CD4-positive, alpha-beta memory T cell (primary cell): ENCODE measurements at regions of chr17 and their contacts with region 1.

Region 1: GRCh38 chr17:50865984-50866774 is at the start of gene TOB1:
- DNase-seq: peak; percentile 94 to 97 (median 95)
- H3K4me3 ChIP-seq: peak within 1 kb of the TSS; percentile 87 to 92
- H3K4me3 Mint-ChIP-seq: peak within 1 kb of the TSS; percentile 97 to 100 (median 98)
- H3K27ac ChIP-seq: peak within 1 kb of the TSS; percentile 97
- H3K27ac Mint-ChIP-seq: peak within 1 kb of the TSS; percentile 96 to 100 (median 99)
- H3K4me1 ChIP-seq: peaks cover 67% of the 10 kb centered on the region
- H3K4me1 Mint-ChIP-seq: peaks cover 38 to 73% (median 51%) of the 10 kb centered on the region in 4 donors
- H3K27me3 ChIP-seq: no peaks in the 10 kb centered on the region
- H3K27me3 Mint-ChIP-seq: no peaks in the 10 kb centered on the region
- total RNA-seq, gene TOB1: 93.7 to 104 TPM

Region 2: GRCh38 chr17:50719144-50719923 is 146.8 kb before region 1 on chr17 and contains the start of gene LUC7L3:
- CTCF ChIA-PET with region 1: no interaction called
- POLR2A ChIA-PET with region 1: interaction called, 16 read pairs
- intact Hi-C with region 1: no loop called
- DNase-seq: peak; percentile 91 to 96 (median 93)
- H3K4me3 ChIP-seq: peak within 1 kb of the TSS; percentile 55 to 100
- H3K4me3 Mint-ChIP-seq: peak within 1 kb of the TSS; percentile 86 to 99 (median 98)
- H3K27ac ChIP-seq: peak within 1 kb of the TSS; percentile 97
- H3K27ac Mint-ChIP-seq: peak within 1 kb of the TSS; percentile 78 to 99 (median 99)
- H3K4me1 ChIP-seq: peaks cover 42% of the 10 kb centered on the region
- H3K4me1 Mint-ChIP-seq: peaks cover 17 to 44% (median 32%) of the 10 kb centered on the region in 4 donors
- H3K27me3 ChIP-seq: no peaks in the 10 kb centered on the region
- H3K27me3 Mint-ChIP-seq: no peaks in the 10 kb centered on the region
- total RNA-seq, gene LUC7L3: 254 to 291 TPM

Region 3: DNA sequence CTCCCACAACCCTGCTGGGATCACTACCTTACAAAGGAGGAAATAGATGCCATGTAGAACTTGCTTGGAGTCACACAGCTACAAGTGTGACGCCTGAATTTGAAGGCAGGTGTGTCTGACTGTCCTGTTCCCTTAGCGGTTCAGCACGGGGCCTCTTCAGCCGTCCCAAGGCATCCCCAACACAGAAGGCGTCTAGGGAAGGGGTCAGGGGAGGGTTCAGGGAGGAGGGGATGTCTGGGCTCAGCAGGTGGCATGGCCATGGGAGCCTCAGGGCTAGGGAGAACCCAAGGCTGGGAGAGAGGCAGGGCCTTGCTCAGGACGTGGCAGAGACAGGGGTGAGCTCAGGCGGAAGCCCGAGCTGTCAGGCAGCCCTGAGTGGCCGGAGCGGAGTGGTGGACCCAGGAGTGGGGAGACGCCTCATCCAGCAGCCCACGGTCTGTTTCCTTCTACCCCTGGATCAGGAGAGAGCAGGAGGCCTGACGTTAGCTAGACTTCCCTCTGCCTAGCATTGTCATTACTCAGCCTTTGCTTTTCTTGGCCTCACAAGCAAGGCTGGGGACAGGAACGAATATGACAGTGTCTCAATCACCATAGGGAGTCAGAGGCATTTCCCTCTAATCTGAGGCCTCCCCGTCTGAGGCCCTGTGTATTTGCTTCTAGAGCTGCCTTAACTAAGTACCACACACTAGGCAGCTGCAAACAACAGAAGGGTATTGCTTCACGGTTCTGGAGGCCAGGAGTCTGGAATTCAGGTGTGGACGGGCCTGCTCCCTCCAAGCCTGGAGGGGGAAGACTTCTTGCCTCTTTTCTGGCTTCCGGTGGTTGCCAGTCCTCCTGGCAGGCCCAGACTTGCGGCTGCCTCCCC is 67.5 kb before region 1 on chr17:
- CTCF ChIA-PET with region 1: no interaction called
- POLR2A ChIA-PET with region 1: no interaction called
- intact Hi-C with region 1: no loop called
- DNase-seq: no peak
- H3K4me3 ChIP-seq: no peak overlapping the region
- H3K4me3 Mint-ChIP-seq: no peak overlapping the region
- H3K27ac ChIP-seq: no peak overlapping the region
- H3K27ac Mint-ChIP-seq: peak overlapping the region in 1 of 7 donors; percentile 46
- H3K4me1 ChIP-seq: no peaks in the 10 kb centered on the region
- H3K4me1 Mint-ChIP-seq: no peaks in the 10 kb centered on the region
- H3K27me3 ChIP-seq: no peaks in the 10 kb centered on the region
- H3K27me3 Mint-ChIP-seq: no peaks in the 10 kb centered on the region

Region 4: DNA sequence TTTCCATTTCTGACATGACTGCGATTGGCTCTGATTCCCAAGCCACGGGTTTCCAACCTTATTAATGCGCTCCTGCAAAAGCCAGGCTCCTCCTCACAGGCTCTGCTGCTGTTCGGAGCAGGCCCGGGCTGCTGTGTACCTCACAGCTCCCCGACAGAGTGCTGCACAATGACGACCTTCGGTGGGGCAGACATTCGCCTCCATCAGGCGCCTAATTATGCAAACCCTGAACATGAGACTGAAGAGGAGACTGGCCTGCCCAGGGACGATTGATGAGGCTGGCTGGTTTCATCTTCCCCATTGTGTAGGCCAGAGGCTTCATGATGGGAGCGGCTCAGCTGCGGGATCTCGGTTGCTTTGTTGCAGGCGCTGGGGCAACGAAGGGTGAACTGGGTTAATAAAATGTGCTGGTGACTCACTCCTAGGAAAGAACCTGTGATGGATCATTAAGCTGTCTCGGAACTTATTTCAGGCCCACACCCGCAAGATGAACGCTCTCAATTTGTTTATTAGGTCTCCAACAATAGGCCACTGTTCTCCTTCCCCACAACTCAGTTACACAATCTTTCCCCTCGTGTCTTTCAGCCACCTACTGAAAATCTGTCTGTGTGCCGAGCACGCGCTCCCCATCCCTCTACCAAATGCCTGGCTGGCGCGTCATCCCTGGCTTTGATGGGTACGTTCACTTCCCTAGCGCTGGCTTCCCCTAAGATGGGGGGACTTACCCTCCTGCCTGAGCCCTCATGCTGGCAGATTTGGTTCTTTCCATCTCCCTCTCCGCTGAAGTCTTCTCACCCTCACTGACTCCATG is 27.2 kb after region 1 on chr17:
- CTCF ChIA-PET with region 1: interaction called, 4 read pairs
- POLR2A ChIA-PET with region 1: interaction called, 688 read pairs
- intact Hi-C with region 1: no loop called
- DNase-seq: no peak
- H3K4me3 ChIP-seq: no peak overlapping the region
- H3K4me3 Mint-ChIP-seq: no peak overlapping the region
- H3K27ac ChIP-seq: no peak overlapping the region
- H3K27ac Mint-ChIP-seq: no peak overlapping the region
- H3K4me1 ChIP-seq: no peaks in the 10 kb centered on the region
- H3K4me1 Mint-ChIP-seq: peaks cover 3 to 9% (median 7%) of the 10 kb centered on the region in 4 donors
- H3K27me3 ChIP-seq: no peaks in the 10 kb centered on the region
- H3K27me3 Mint-ChIP-seq: no peaks in the 10 kb centered on the region

Region 5: DNA sequence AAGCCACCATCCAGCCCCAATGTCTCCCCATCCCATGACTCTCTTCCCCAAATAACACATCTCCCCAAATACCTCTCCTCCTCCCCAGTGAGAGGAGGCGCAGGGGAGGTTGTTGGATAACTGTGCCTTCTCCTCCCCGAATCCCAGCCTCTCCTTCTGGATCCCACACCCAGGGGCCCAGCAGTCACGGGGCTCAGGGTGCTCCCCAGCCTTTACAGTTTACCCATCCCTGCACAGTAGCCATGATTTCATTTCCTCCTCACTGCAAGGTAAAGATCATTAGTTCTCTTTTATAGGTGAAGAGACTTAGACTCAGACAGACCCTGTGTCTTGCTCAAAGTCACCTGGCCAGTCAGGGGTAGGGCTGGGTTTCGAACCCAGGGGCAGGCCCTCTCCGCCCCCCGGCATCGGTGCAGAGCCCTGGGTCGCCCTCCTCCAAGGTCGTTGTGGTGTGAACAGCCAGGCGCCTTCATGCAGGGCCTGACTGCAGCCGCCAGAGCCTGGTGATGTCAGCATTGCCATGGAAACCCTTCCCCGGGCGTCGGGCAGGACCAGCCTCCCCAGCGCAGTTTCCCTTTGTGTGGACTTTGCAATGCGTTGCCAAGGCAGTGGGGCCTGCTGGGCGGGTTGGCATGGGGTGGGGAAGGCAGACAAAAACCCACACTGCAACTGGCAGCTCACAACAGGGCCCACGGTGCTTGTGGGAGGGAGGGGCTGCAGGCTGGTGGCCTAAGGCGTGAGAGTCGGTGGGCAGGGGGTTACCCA is 53.3 kb after region 1 on chr17:
- CTCF ChIA-PET with region 1: interaction called, 6 read pairs
- POLR2A ChIA-PET with region 1: interaction called, 688 read pairs
- intact Hi-C with region 1: loop called (anchors 1 kb)
- DNase-seq: peak; percentile 86 to 97 (median 92)
- H3K4me3 ChIP-seq: peak overlapping the region; percentile 14 to 27
- H3K4me3 Mint-ChIP-seq: peak overlapping the region; percentile 50 to 89 (median 75)
- H3K27ac ChIP-seq: peak overlapping the region; percentile 75
- H3K27ac Mint-ChIP-seq: peak overlapping the region; percentile 97 to 99 (median 99)
- H3K4me1 ChIP-seq: peaks cover 39% of the 10 kb centered on the region
- H3K4me1 Mint-ChIP-seq: peaks cover 15 to 56% (median 38%) of the 10 kb centered on the region in 4 donors
- H3K27me3 ChIP-seq: no peaks in the 10 kb centered on the region
- H3K27me3 Mint-ChIP-seq: no peaks in the 10 kb centered on the region

Region 6: GRCh38 chr17:50949989-50950881 is 84.1 kb after region 1 on chr17:
- CTCF ChIA-PET with region 1: interaction called, 96 read pairs
- POLR2A ChIA-PET with region 1: interaction called, 673 read pairs
- intact Hi-C with region 1: loop called (anchors 1 kb)
- DNase-seq: peak in 4 of 5 donors; percentile 39 to 66 (median 44)
- H3K4me3 ChIP-seq: no peak overlapping the region
- H3K4me3 Mint-ChIP-seq: peak overlapping the region in 2 of 8 donors; percentile 25 to 35
- H3K27ac ChIP-seq: no peak overlapping the region
- H3K27ac Mint-ChIP-seq: peak overlapping the region in 4 of 7 donors; percentile 39 to 72 (median 58)
- H3K4me1 ChIP-seq: peaks cover 20% of the 10 kb centered on the region
- H3K4me1 Mint-ChIP-seq: peaks cover 16 to 39% (median 25%) of the 10 kb centered on the region in 4 donors
- H3K27me3 ChIP-seq: no peaks in the 10 kb centered on the region
- H3K27me3 Mint-ChIP-seq: peaks cover 0 to 2% of the 10 kb centered on the region in 2 donors

Region 7: DNA sequence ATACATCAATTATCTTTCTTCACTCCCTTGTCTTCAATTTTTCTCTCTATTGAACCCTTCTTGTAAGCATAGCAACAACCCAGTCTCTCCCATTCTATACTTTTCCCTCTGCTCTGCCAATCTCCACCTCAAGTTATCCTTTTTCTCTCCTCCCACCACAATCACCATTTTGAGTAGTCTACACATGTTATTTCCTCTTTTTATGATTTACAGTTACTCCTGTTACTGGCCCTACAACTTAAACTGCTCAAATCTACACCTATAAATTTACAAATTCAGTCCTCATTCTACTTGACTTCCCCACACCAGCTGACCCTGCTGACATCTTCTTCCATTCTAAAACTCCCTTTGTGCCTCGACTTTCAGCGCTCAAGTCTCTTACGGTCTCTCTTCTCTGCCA is 169.9 kb after region 1 on chr17:
- CTCF ChIA-PET with region 1: no interaction called
- POLR2A ChIA-PET with region 1: no interaction called
- intact Hi-C with region 1: no loop called
- DNase-seq: no peak
- H3K4me3 ChIP-seq: no peak overlapping the region
- H3K4me3 Mint-ChIP-seq: no peak overlapping the region
- H3K27ac ChIP-seq: no peak overlapping the region
- H3K27ac Mint-ChIP-seq: peak overlapping the region in 5 of 7 donors; percentile 4 to 68 (median 43)
- H3K4me1 ChIP-seq: peaks cover under 1% of the 10 kb centered on the region
- H3K4me1 Mint-ChIP-seq: peaks cover 10 to 25% (median 12%) of the 10 kb centered on the region in 4 donors
- H3K27me3 ChIP-seq: no peaks in the 10 kb centered on the region
- H3K27me3 Mint-ChIP-seq: no peaks in the 10 kb centered on the region

Region 8: GRCh38 chr17:51153210-51154072 is 287.3 kb after region 1 on chr17 and contains the start of gene NME1:
- CTCF ChIA-PET with region 1: interaction called, 4 read pairs
- POLR2A ChIA-PET with region 1: interaction called, 23 read pairs
- intact Hi-C with region 1: loop called (anchors 5 kb)
- DNase-seq: peak; percentile 98 to 99 (median 98)
- H3K4me3 ChIP-seq: peak within 1 kb of the TSS; percentile 77 to 85
- H3K4me3 Mint-ChIP-seq: no peak within 1 kb of the TSS
- H3K27ac ChIP-seq: peak within 1 kb of the TSS; percentile 61
- H3K27ac Mint-ChIP-seq: no peak within 1 kb of the TSS
- H3K4me1 ChIP-seq: peaks cover 21% of the 10 kb centered on the region
- H3K4me1 Mint-ChIP-seq: peaks cover 0 to 7% (median 2%) of the 10 kb centered on the region in 4 donors
- H3K27me3 ChIP-seq: no peaks in the 10 kb centered on the region
- H3K27me3 Mint-ChIP-seq: peaks cover 0 to 1% of the 10 kb centered on the region in 2 donors
- total RNA-seq, gene NME1: 10.0 to 12.2 TPM